ENCODE measurements at regions of chr19 and their contacts with region 1.

Region 1: DNA sequence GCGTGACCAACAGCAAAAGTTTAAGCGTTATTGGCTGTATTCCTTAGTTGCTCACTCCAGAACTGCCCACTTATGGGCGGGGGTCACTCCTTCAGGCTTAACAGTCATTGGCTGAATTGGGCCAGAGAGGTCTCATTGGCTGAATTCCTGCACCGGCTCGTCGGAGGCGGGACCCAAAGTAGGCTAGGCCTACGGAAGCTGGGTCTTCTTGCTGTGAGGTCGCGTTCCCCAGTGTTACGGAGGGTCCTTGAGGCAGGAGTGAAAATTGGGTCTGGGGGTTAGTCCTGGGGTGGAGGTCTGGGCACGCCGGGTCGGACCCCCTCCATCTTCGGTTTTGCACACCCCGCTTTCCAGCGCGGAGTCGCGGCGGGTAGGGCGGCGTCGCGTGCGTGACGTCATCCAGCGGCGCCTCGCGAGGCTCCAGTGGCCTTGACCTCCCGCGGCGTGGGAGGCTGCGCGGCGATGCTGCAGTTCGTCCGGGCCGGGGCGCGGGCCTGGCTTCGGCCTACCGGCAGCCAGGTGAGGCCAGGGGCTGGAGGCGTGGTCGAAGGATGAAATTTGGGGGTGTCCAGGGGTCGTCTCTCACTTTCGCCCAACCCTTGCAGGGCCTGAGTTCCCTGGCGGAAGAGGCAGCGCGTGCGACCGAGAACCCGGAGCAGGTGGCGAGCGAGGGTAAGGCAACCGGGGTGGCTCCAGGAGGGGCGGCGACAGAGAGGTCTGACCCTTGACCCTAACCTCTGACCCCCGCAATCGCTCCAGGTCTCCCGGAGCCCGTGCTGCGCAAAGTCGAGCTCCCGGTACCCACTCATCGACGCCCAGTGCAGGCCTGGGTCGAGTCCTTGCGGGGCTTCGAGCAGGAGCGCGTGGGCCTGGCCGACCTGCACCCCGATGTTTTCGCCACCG is at the start of gene MRPL4:
- DNase-seq: peak; percentile 97 to 99 (median 98)
- H3K4me3 ChIP-seq: peak within 1 kb of the TSS; percentile 84 to 99
- H3K4me3 Mint-ChIP-seq: peak within 1 kb of the TSS; percentile 97 to 100 (median 98)
- H3K27ac ChIP-seq: peak within 1 kb of the TSS; percentile 67
- H3K27ac Mint-ChIP-seq: peak within 1 kb of the TSS; percentile 96 to 99 (median 98)
- H3K4me1 ChIP-seq: peaks cover 25% of the 10 kb centered on the region
- H3K4me1 Mint-ChIP-seq: peaks cover 14 to 29% (median 20%) of the 10 kb centered on the region in 4 donors
- H3K27me3 ChIP-seq: no peaks in the 10 kb centered on the region
- H3K27me3 Mint-ChIP-seq: no peaks in the 10 kb centered on the region
- total RNA-seq, gene MRPL4: 42.7 to 44.6 TPM

Region 2: DNA sequence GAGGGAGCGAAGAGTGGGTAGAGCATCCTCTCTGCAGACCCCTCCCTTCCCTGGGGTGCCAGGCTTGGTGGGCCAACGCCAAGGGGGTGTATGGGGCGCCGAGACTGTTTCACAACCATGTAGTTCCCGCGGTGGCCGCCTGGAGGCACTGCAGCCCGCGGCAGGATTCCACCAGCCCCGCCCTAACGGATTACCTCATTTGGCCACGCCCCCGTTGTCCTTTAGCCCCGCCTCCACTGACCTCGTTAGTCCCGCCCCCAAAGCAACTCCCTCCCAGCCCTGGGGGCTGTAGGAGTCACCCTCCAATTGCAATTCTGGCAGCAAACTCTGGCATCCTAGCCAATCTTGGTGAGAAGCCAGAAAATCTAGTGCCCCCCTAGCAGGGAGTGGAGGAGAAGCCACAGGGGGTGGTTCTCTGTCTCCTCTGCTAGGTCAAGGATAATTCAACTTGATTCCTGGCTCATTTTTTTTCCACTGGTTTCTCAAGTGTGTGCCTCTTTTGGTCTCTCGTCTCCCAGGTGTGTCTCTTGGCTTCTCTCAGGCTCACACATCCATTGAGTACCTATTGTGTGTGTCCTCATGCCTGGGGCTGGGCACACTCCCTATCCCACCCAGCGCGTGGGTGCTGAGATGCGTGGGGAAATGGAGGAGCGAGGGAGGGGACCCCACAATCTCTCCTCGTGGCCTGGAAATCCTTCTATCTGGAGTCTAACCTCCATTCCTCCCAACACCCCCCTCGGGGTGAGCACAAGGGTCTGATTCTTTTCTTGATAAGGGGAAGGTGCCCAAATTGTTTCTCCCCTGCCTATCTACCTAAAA is 317.7 kb before region 1 on chr19:
- CTCF ChIA-PET with region 1: interaction called, 24 read pairs
- POLR2A ChIA-PET with region 1: no interaction called
- intact Hi-C with region 1: loop called (anchors 1 kb)
- DNase-seq: peak; percentile 73 to 80 (median 79)
- H3K4me3 ChIP-seq: no peak overlapping the region
- H3K4me3 Mint-ChIP-seq: peak overlapping the region in 6 of 8 donors; percentile 13 to 63 (median 42)
- H3K27ac ChIP-seq: no peak overlapping the region
- H3K27ac Mint-ChIP-seq: peak overlapping the region in 3 of 7 donors; percentile 19 to 52 (median 26)
- H3K4me1 ChIP-seq: peaks cover 30% of the 10 kb centered on the region
- H3K4me1 Mint-ChIP-seq: peaks cover 15 to 34% (median 26%) of the 10 kb centered on the region in 4 donors
- H3K27me3 ChIP-seq: peaks cover 24% of the 10 kb centered on the region
- H3K27me3 Mint-ChIP-seq: peaks cover 39 to 51% of the 10 kb centered on the region in 2 donors

Region 3: GRCh38 chr19:10095948-10096621 is 156.0 kb before region 1 on chr19:
- CTCF ChIA-PET with region 1: interaction called, 14 read pairs
- POLR2A ChIA-PET with region 1: interaction called, 14 read pairs
- intact Hi-C with region 1: loop called (anchors 1 kb)
- DNase-seq: peak; percentile 85 to 94 (median 92)
- H3K4me3 ChIP-seq: peak overlapping the region in 1 of 2 donors; percentile 56
- H3K4me3 Mint-ChIP-seq: peak overlapping the region in 7 of 8 donors; percentile 40 to 61 (median 41)
- H3K27ac ChIP-seq: peak overlapping the region; percentile 63
- H3K27ac Mint-ChIP-seq: peak overlapping the region in 6 of 7 donors; percentile 42 to 87 (median 76)
- H3K4me1 ChIP-seq: peaks cover 28% of the 10 kb centered on the region
- H3K4me1 Mint-ChIP-seq: peaks cover 12 to 43% (median 19%) of the 10 kb centered on the region in 4 donors
- H3K27me3 ChIP-seq: no peaks in the 10 kb centered on the region
- H3K27me3 Mint-ChIP-seq: no peaks in the 10 kb centered on the region

Region 4: DNA sequence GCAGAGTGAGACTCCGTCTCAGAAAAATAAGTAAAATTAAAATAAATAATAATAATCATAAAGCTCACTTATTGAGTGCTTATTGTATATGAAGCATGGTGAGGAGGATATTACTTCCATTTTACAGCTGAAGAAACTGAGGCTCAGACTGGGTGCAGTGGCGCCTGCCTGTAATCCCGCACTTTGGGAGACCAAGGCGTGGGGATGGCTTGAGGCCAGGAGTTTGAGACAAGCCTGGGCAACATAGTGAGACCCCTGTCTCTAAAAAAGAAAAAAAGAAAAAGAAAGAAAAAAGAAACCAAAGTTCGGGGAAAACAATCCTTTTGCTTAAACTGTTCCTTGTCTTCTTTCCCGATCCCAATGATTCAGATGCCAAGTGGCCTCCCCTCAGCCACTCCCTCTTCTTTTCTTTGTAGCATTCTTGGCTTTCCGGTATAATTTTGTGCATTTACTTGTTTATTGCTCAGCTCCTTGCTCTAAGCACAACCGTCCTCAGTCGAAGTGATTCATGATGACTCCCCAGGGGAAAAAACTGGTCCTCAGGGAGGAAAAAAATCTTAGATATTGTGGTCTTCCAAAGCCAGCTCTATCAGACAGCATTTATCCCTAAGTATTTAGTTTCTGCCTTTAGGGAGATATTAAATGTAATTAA is 131.4 kb before region 1 on chr19:
- CTCF ChIA-PET with region 1: interaction called, 8 read pairs
- POLR2A ChIA-PET with region 1: no interaction called
- intact Hi-C with region 1: loop called (anchors 2 kb)
- DNase-seq: no peak
- H3K4me3 ChIP-seq: no peak overlapping the region
- H3K4me3 Mint-ChIP-seq: peak overlapping the region in 3 of 8 donors; percentile 9 to 55 (median 27)
- H3K27ac ChIP-seq: no peak overlapping the region
- H3K27ac Mint-ChIP-seq: no peak overlapping the region
- H3K4me1 ChIP-seq: peaks cover 25% of the 10 kb centered on the region
- H3K4me1 Mint-ChIP-seq: peaks cover 3 to 35% (median 10%) of the 10 kb centered on the region in 4 donors
- H3K27me3 ChIP-seq: no peaks in the 10 kb centered on the region
- H3K27me3 Mint-ChIP-seq: no peaks in the 10 kb centered on the region

Region 5: GRCh38 chr19:10194500-10195289 is 57.3 kb before region 1 on chr19 and contains the start of gene DNMT1:
- CTCF ChIA-PET with region 1: interaction called, 23 read pairs
- POLR2A ChIA-PET with region 1: interaction called, 9 read pairs
- intact Hi-C with region 1: loop called (anchors 1 kb)
- DNase-seq: peak; percentile 94 to 98 (median 95)
- H3K4me3 ChIP-seq: peak within 1 kb of the TSS; percentile 61 to 62
- H3K4me3 Mint-ChIP-seq: peak within 1 kb of the TSS; percentile 90 to 97 (median 96)
- H3K27ac ChIP-seq: peak within 1 kb of the TSS; percentile 77
- H3K27ac Mint-ChIP-seq: peak within 1 kb of the TSS; percentile 83 to 97 (median 95)
- H3K4me1 ChIP-seq: peaks cover 41% of the 10 kb centered on the region
- H3K4me1 Mint-ChIP-seq: peaks cover 22 to 52% (median 37%) of the 10 kb centered on the region in 4 donors
- H3K27me3 ChIP-seq: no peaks in the 10 kb centered on the region
- H3K27me3 Mint-ChIP-seq: no peaks in the 10 kb centered on the region
- total RNA-seq, gene DNMT1: 208 to 250 TPM

Region 6: DNA sequence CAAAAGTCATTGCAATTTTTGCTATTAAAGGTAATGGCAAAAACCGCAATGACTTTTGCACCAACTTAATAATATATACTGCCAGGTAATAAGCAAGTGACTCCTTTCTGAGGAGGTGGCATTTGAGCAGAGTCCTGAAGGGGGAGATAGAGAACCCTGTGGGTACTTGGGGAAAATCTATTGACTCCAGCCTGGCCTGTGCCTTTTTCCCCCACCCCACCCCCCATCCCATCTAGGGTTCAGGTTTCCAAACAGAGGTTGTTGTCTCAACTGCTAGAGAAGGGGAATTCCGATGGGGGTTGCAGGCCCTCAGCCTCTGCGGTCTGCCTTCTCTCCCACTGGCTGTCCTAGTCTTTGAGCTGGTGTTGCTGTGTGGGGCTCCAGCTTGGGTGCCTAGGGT is 32.4 kb before region 1 on chr19:
- CTCF ChIA-PET with region 1: interaction called, 132 read pairs
- POLR2A ChIA-PET with region 1: interaction called, 4 read pairs
- intact Hi-C with region 1: loop called (anchors 1 kb)
- DNase-seq: peak; percentile 32 to 81 (median 44)
- H3K4me3 ChIP-seq: no peak overlapping the region
- H3K4me3 Mint-ChIP-seq: no peak overlapping the region
- H3K27ac ChIP-seq: no peak overlapping the region
- H3K27ac Mint-ChIP-seq: peak overlapping the region in 2 of 7 donors; percentile 41 to 42
- H3K4me1 ChIP-seq: peaks cover 15% of the 10 kb centered on the region
- H3K4me1 Mint-ChIP-seq: peaks cover 4 to 16% (median 5%) of the 10 kb centered on the region in 4 donors
- H3K27me3 ChIP-seq: no peaks in the 10 kb centered on the region
- H3K27me3 Mint-ChIP-seq: no peaks in the 10 kb centered on the region

Region 7: GRCh38 chr19:10238172-10238783 is 13.8 kb before region 1 on chr19:
- CTCF ChIA-PET with region 1: interaction called, 132 read pairs
- POLR2A ChIA-PET with region 1: interaction called, 18 read pairs
- intact Hi-C with region 1: no loop called
- DNase-seq: no peak
- H3K4me3 ChIP-seq: no peak overlapping the region
- H3K4me3 Mint-ChIP-seq: peak overlapping the region in 1 of 8 donors; percentile 46
- H3K27ac ChIP-seq: no peak overlapping the region
- H3K27ac Mint-ChIP-seq: peak overlapping the region in 5 of 7 donors; percentile 27 to 82 (median 46)
- H3K4me1 ChIP-seq: peaks cover 25% of the 10 kb centered on the region
- H3K4me1 Mint-ChIP-seq: peaks cover 14 to 27% (median 17%) of the 10 kb centered on the region in 4 donors
- H3K27me3 ChIP-seq: no peaks in the 10 kb centered on the region
- H3K27me3 Mint-ChIP-seq: no peaks in the 10 kb centered on the region